ENCODE measurements at regions of chr2 and their contacts with region 1.

Region 1: DNA sequence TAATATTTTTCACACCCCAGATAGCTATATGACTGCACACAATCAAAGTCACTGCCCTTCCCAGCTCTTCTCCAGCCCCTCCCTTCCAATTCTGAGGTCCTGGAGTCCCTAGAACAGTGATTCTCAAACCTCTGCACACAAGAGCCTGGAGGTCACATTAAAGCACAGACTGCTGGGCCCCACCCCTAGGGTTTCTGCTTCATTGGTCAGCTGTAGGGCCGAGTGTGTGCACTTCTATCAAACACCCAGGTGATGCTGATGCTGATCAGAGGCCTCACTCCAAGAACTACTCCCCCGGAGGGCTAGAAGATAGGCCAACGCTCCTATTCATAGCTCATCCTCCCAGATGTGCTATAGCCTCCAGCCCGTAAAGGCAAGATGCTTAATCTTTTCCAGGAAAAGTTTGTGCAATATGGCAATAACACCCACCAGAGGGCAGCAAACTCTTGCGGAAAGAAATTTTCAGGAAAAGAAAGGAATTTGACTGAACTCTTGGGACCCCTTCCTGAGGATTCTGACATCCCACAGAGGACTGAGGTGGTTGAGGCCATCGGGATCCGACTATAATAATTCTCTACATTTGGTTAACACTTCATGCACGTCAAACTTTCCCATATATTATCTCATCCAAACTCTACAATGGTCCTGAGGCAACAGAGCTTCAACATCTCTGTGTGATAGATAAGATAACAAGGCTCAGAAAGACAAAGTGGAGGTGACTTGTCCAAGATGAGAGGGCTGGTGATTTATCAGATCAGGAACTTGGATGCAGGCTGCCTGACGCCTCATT is 194.2 kb upstream of the PKDCC start:
- DNase-seq: peak; percentile 39
- H3K4me3 ChIP-seq: no peak overlapping the region
- H3K27ac ChIP-seq: peak overlapping the region; percentile 25
- H3K27me3 ChIP-seq: peaks cover 16% of the 10 kb centered on the region
- CTCF ChIP-seq: peak; percentile 78

Region 2: DNA sequence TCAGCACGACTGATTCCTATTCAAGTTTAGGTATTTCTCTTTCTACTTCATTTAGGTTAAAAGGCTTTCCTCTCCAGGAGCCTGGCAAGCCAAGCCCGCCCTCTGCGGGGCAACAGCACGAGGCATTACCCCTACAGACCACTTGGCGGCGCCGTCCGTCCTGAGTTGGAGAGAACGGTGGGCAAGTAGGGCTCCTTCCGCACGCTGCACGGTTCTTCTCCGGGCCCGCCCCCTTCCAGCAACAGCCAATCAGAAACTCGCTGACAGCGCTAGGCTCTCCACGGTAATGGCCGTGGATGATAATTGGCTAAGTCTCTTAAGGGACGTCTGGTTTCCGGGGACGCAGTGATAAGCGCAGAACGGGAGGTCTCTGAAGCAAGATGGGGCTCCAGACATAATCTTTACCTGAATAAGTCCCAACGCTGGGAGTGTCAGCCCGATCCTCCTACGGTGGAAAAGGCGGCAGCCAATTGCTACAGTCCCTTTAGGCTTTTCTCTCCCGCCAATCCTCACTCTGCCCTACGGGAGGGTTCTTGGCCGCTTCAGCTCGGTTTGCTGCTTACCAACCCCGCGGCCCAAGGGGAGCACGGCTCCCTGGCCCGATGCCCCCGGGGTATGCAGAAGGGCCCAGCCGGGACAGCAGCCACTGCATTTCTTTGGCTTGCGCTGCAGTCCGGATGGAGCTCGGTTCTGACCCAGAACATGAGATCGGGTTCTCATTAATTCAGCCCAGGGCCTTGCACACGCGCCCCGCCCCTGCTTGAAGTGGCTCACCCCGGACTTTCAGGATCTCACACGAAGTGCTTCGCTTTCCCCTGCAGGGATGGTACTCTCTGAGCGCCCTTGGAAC is 12.7 kb before region 1 on chr2:
- CTCF ChIA-PET with region 1: interaction called, 41 read pairs
- POLR2A ChIA-PET with region 1: no interaction called
- DNase-seq: peak; percentile 92
- H3K4me3 ChIP-seq: peak overlapping the region; percentile 81
- H3K27ac ChIP-seq: no peak overlapping the region
- H3K27me3 ChIP-seq: peaks cover 11% of the 10 kb centered on the region
- CTCF ChIP-seq: peak; percentile 99

Region 3: DNA sequence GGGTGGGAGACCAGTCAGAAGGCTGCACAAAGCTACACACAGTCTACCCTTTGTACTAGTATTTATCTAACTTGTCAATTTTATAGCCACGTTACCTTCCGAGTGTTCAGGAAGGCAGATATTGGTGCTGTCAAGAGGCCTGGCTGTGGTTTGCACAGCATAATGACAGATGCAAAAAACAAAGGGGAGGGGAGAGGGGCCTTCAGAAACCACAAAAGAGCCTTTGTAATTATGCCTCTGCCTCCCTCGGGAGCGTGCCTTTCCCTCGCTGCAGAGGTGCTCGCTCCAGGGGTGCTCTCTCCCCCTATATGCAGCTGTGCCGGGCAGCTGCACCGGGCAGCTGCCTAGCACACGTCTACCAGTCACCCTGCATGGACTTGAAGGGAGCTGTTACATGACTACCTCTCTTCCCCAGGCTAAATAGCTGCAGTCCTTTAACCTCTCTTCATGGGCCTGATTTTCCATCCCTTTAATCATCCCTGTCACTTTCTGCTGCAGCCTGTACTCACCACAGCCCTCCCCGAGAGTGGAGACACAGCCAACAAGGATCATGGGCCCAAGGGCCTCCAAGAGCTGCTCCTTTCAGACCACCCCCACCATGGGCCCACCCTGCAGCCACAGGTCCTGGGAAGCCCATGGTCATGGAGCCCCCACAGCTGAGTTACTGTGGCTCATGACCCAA is 25.8 kb after region 1 on chr2:
- CTCF ChIA-PET with region 1: interaction called, 12 read pairs
- POLR2A ChIA-PET with region 1: no interaction called
- DNase-seq: no peak
- H3K4me3 ChIP-seq: no peak overlapping the region
- H3K27ac ChIP-seq: no peak overlapping the region
- H3K27me3 ChIP-seq: peaks cover 4% of the 10 kb centered on the region
- CTCF ChIP-seq: no peak

Region 4: GRCh38 chr2:42047488-42048298 is 194.1 kb after region 1 on chr2 and contains the start of gene PKDCC:
- CTCF ChIA-PET with region 1: interaction called, 12 read pairs
- POLR2A ChIA-PET with region 1: no interaction called
- DNase-seq: peak; percentile 37
- H3K4me3 ChIP-seq: peak within 1 kb of the TSS; percentile 93
- H3K27ac ChIP-seq: peak within 1 kb of the TSS; percentile 61
- H3K27me3 ChIP-seq: peaks cover 6% of the 10 kb centered on the region
- CTCF ChIP-seq: no peak
- polyA plus RNA-seq, gene PKDCC: 87.0 and 107 TPM in 2 replicates

Region 5: DNA sequence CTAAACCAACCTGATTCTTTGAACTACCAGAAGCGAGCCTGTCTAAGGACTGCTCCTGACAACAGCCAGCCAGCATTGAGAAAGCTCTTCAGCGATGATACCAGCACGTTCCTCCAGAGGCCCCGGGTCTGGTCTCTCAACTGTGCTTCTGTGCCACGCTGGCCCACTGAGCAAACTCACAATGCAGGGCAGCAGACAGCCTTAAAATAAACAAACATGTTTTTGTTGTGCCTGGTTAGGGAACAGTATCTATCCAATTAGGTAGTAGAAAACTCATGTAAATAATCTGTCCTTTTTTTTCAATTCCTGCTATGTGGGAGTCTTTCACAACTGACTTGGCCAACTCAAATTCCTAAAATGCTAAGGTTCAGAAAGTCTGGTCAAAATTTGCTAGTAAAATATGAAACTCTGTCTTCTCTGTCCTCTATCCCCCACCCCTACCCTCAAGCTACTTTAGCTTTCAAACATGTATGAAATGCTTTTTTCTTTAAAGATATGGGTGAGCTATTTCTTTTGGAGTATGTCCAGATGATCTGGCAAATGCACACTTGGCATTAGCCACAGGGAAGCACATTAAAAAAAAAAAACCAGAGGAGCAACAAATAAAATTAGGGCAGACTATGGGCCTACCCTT is 294.1 kb after region 1 on chr2:
- CTCF ChIA-PET with region 1: no interaction called
- POLR2A ChIA-PET with region 1: no interaction called
- DNase-seq: no peak
- H3K4me3 ChIP-seq: no peak overlapping the region
- H3K27ac ChIP-seq: peak overlapping the region; percentile 49
- H3K27me3 ChIP-seq: no peaks in the 10 kb centered on the region
- CTCF ChIP-seq: no peak

Region 6: GRCh38 chr2:42328148-42328833 is 474.7 kb after region 1 on chr2:
- CTCF ChIA-PET with region 1: interaction called, 17 read pairs
- POLR2A ChIA-PET with region 1: no interaction called
- DNase-seq: no peak
- H3K4me3 ChIP-seq: no peak overlapping the region
- H3K27ac ChIP-seq: no peak overlapping the region
- H3K27me3 ChIP-seq: no peaks in the 10 kb centered on the region
- CTCF ChIP-seq: peak; percentile 54

Measured in AG04450 (cell line).